Ascending aorta (tissue), 2 donors: ENCODE measurements at regions of chr9 and their contacts with region 1.

Region 1: GRCh38 chr9:6226696-6227095 is 11.1 kb downstream of the IL33 start:
- DNase-seq: no peak
- H3K4me3 ChIP-seq: no peak overlapping the region
- H3K27ac ChIP-seq: peak overlapping the region; percentile 50 to 58
- H3K4me1 ChIP-seq: peaks cover 3 to 45% of the 10 kb centered on the region in 2 donors
- H3K27me3 ChIP-seq: no peaks in the 10 kb centered on the region
- CTCF ChIP-seq: no peak

Region 2: DNA sequence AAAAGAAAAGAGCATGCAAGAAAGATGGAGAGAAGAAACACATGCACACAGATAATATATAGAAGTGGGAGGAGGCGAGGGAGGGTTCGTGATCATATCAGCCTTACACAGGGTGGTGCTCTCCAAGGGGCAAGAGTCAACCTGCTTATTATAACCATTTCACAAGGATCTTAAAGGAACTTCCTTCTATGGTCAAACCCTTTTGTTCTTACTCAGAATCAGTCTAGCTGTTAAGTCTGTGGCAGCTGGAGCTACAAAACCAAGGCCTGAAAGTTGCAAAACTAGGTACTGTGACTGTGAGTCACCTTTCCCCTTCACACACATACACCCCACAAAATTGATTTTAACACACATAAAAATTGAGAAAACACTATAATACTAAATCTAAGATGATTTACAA is 375.3 kb before region 1 on chr9:
- intact Hi-C with region 1: no loop called
- DNase-seq: no peak
- H3K4me3 ChIP-seq: no peak overlapping the region
- H3K27ac ChIP-seq: no peak overlapping the region
- H3K4me1 ChIP-seq: no peaks in the 10 kb centered on the region
- H3K27me3 ChIP-seq: no peaks in the 10 kb centered on the region
- CTCF ChIP-seq: no peak

Region 3: GRCh38 chr9:6305954-6306563 is 79.4 kb after region 1 on chr9:
- intact Hi-C with region 1: no loop called
- DNase-seq: no peak
- H3K4me3 ChIP-seq: no peak overlapping the region
- H3K27ac ChIP-seq: no peak overlapping the region
- H3K4me1 ChIP-seq: no peaks in the 10 kb centered on the region
- H3K27me3 ChIP-seq: no peaks in the 10 kb centered on the region
- CTCF ChIP-seq: peak; percentile 36 to 65 (median 52)

Region 4: DNA sequence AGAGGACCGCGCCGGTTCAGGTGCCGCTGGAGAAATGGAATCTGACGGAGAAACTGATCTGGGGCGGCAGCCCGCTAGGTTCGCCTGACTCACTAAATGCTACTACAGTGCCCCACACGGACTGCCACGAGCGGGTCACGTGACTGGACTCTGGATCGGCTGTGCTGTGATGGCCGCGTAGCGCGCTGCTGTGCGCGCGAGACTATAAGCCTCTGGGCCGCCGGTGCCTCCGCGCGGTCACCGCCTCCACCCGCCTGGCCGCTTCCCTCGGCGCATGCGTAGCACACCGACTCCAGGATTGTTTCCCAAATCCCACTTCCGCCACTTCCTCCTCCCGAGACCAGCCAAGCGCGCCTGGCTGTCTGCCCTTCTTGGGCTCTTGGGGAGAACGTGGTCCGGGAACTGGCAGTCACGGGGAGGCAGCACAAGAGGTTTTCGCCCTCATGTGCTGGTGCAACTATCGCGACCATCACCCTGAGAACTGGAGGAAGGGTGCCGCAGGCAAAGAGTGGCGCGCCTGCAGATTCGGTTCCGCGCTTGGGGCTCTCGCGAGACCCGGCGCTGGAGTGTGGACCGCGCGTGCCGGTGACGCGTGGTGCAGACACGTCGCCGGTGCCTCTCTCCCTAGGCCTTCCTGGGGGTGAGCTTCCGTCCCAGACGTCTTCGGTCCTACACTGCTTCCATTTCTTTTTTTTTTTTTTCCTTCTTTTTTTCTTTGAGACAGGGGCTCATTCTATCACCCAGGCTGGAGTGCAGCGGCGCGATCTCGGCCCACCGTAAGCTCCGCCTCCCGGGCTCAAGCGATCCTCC is 454.7 kb after region 1 on chr9:
- intact Hi-C with region 1: loop called (anchors 10 kb)
- DNase-seq: peak; percentile 90 to 98
- H3K4me3 ChIP-seq: peak overlapping the region; percentile 71 to 72
- H3K27ac ChIP-seq: peak overlapping the region; percentile 95 to 96
- H3K4me1 ChIP-seq: peaks cover 0 to 10% of the 10 kb centered on the region in 2 donors
- H3K27me3 ChIP-seq: no peaks in the 10 kb centered on the region
- CTCF ChIP-seq: peak in 1 of 3 experiments; percentile 6